Esophagus muscularis mucosa (tissue), 4 donors: ENCODE measurements at regions of chr3 and their contacts with region 1.

Region 1: DNA sequence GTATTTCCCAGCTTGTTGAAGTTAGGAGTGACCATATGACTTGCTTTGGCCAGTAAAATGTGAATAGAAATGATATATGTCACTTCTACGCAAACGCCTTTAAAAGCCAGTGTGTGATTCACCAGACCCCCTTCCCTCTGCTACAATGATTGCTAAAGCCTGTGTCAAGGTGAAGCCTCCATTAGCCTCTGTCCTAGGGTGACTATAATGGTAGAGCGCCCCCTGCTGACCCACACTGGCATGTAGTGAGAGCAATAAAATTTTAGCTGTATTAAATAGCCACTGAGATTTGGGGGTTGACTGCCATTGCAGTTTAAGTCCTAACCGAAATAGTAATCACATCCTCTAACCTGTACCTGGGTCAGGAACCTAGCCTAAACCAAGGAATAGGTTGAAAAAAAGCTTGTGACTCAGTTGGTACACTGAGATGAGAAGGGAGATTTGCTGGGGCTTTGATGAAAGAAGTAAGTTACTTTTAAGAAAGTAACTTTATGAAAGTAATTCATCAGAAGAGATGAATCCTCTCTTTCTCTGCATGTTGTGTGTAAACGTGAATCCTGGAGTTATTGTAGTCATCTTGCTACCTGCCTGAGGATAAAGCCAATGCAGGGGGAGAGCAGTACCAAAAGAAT is 52.6 kb downstream of the GTF2E1 start:
- DNase-seq: peak; percentile 95
- H3K4me3 ChIP-seq: no peak overlapping the region
- H3K27ac ChIP-seq: no peak overlapping the region
- H3K4me1 ChIP-seq: no peaks in the 10 kb centered on the region
- H3K27me3 ChIP-seq: no peaks in the 10 kb centered on the region
- CTCF ChIP-seq: peak; percentile 78 to 88 (median 82)
- EP300 ChIP-seq: no peak
- POLR2A ChIP-seq: no peak

Region 2: GRCh38 chr3:120245386-120245785 is 549.7 kb before region 1 on chr3:
- intact Hi-C with region 1: loop called (anchors 10 kb)
- DNase-seq: no peak
- H3K4me3 ChIP-seq: no peak overlapping the region
- H3K27ac ChIP-seq: no peak overlapping the region
- H3K4me1 ChIP-seq: no peaks in the 10 kb centered on the region
- H3K27me3 ChIP-seq: no peaks in the 10 kb centered on the region
- CTCF ChIP-seq: no peak
- EP300 ChIP-seq: no peak
- POLR2A ChIP-seq: no peak

Region 3: DNA sequence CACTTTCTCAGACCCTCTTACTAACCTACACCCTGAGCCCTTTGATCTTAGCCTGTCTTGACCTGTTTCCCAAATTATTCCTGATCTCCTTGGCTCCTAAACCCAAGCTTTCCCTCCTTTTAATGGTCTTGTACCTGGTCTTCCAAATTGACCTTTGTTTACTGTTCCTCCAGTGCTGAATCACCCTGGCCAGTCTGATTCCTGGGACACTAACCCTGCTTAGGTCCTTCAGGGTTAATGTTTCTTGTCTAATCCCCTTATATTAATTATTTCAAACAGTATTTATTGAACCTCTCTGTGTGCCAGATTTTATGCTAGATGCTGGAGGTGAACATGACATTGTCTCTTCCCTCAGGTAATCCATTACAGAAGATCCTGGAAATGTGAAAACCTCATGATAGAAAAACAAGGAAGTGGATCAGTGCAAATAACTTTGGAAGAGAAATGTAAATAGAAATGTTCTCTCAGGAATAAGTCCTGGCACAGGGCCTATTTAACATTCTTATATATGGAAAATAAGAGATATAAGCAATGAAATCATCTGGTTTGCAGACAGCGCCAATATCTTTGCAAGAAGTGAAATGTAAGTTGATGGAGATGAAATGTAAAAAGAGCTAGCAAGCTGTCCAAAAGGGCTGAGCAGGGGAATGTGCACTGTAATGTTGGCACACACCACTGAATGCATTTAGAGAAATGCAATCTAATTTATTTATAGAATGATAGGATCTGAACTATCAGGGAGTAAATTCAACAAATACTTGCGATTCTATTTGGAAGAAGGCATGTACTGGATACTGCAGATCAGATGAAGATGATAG is 133.8 kb before region 1 on chr3:
- intact Hi-C with region 1: no loop called
- DNase-seq: no peak
- H3K4me3 ChIP-seq: no peak overlapping the region
- H3K27ac ChIP-seq: no peak overlapping the region
- H3K4me1 ChIP-seq: peaks cover 0 to 10% (median 4%) of the 10 kb centered on the region in 4 donors
- H3K27me3 ChIP-seq: no peaks in the 10 kb centered on the region
- CTCF ChIP-seq: no peak
- EP300 ChIP-seq: no peak
- POLR2A ChIP-seq: no peak

Region 4: DNA sequence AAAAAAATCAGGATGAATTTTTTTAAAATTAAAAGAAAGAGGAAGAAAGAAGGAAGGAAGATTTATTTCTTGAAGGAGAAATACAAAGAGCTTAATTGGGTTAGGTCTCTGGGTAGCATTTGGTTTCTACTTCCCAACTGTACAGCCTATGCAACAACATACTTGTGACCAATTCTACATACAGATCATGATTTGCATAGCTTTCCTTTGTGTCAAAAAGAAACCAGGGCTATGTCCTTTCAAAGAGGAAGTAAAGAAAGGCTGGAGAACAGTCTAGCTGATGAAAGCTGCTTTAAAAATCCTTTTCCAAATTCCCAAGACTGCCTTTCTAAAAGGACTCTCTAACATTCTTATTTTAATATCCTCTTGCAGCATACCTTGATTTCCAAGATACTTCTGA is 107.0 kb before region 1 on chr3:
- intact Hi-C with region 1: no loop called
- DNase-seq: no peak
- H3K4me3 ChIP-seq: no peak overlapping the region
- H3K27ac ChIP-seq: no peak overlapping the region
- H3K4me1 ChIP-seq: peaks cover 0 to 3% (median 0%) of the 10 kb centered on the region in 4 donors
- H3K27me3 ChIP-seq: no peaks in the 10 kb centered on the region
- CTCF ChIP-seq: no peak
- EP300 ChIP-seq: no peak
- POLR2A ChIP-seq: no peak

Region 5: GRCh38 chr3:120763601-120764000 is 31.5 kb before region 1 on chr3:
- intact Hi-C with region 1: no loop called
- DNase-seq: no peak
- H3K4me3 ChIP-seq: no peak overlapping the region
- H3K27ac ChIP-seq: no peak overlapping the region
- H3K4me1 ChIP-seq: peaks cover 6 to 30% (median 26%) of the 10 kb centered on the region in 4 donors
- H3K27me3 ChIP-seq: no peaks in the 10 kb centered on the region
- CTCF ChIP-seq: no peak
- EP300 ChIP-seq: no peak
- POLR2A ChIP-seq: no peak